GM23248 (cell line): ENCODE measurements at regions of chr22 and their contacts with region 1.

Region 1: GRCh38 chr22:36123673-36124630 is 36.6 kb downstream of the APOL3 start:
- DNase-seq: peak; percentile 99
- H3K4me3 ChIP-seq: peak overlapping the region; percentile 57
- H3K27ac ChIP-seq: peak overlapping the region; percentile 76
- H3K4me1 ChIP-seq: no peaks in the 10 kb centered on the region
- H3K27me3 ChIP-seq: peaks cover 11% of the 10 kb centered on the region

Region 2: DNA sequence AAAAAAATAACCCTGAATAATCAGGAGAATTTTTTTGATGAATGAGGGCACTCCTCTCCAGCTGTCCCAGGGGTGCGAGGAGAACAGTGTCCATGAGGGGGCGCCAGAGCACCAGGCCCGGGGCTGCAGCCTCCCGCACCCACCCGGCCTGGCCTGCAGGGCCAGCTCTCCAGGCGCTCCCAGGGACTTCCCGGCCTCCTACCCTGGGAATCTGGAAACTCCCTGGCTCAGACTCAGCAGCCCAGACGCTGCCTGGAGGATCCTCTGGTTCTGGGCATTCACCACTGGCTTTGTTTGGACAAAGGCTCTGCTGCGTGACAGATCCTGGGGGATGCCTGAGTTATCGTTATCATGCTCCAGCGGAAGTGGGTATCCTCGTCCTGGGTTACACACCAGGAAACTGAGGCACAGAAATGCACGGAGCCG is 693.0 kb before region 1 on chr22:
- in situ Hi-C with region 1: loop called (anchors 25 kb)
- DNase-seq: peak; percentile 96
- H3K4me3 ChIP-seq: no peak overlapping the region
- H3K27ac ChIP-seq: peak overlapping the region; percentile 41; the same call in 1 of the 2 replicates
- H3K4me1 ChIP-seq: peaks cover 21% of the 10 kb centered on the region
- H3K27me3 ChIP-seq: no peaks in the 10 kb centered on the region

Region 3: DNA sequence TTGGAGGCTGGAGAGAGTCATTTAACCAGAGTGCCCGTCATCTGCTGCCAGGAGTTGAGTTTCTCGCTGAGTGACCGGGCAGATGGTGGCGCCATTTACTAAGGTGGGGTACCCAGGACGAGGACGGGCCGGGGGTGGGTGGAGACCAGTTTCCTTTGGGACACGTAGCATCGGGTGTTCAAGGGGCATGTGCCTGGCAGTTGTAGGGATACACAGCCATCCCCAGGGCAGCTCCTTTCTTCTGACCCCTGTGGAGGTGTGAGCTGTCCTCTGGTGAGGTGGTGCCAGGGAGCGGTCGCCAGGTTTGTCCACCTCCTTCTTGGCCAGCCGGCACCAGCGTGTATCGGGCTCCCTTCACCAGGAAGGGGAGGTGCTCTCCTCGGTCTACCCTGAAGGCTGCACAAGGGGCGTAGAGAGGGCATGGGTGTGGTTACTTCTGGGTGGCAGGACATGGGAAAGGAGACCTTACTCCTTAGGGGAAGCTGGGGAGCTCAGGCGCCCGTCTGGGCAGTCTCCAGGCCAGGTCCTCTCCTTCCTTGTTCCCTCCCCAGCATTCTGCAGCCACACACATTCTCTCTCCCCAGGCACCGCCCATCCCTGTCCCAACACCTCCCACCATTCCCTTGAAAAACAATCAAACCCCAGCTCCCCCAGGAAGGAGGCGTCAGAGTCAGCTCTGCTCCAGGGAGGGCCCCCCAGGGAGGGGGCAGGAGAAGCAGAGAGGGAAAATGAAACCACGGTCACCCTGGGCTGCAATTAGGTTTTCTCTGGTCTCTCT is 496.5 kb before region 1 on chr22:
- in situ Hi-C with region 1: loop called (anchors 10 kb)
- DNase-seq: peak; percentile 89
- H3K4me3 ChIP-seq: peak overlapping the region; percentile 75
- H3K27ac ChIP-seq: peak overlapping the region; percentile 98
- H3K4me1 ChIP-seq: peaks cover 23% of the 10 kb centered on the region
- H3K27me3 ChIP-seq: no peaks in the 10 kb centered on the region

Region 4: GRCh38 chr22:35930933-35931332 is 193.0 kb before region 1 on chr22:
- in situ Hi-C with region 1: loop called (anchors 5 kb)
- DNase-seq: peak; percentile 78
- H3K4me3 ChIP-seq: no peak overlapping the region
- H3K27ac ChIP-seq: no peak overlapping the region
- H3K4me1 ChIP-seq: peaks cover 7% of the 10 kb centered on the region; the same call in 1 of the 2 replicates
- H3K27me3 ChIP-seq: no peaks in the 10 kb centered on the region

Region 5: DNA sequence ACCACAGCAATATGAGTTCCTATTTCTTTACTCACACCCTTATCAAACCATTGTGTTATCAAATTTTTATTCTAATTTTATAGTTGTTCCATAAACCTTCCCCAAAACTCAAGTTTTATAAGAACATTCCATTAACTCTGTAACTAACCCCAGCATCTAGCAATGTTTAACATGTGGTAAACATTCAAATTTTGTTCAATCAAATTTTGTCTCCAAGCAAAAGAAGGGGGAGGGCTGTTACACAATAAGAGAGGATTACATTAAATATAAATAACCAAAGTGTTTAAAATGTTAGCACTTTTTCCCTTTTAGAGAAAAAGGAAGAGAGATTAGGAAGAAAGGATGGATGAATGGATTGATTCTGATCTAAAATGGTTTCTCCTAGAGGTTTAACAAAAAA is 115.8 kb before region 1 on chr22:
- in situ Hi-C with region 1: no loop called
- DNase-seq: no peak
- H3K4me3 ChIP-seq: no peak overlapping the region
- H3K27ac ChIP-seq: peak overlapping the region; percentile 65
- H3K4me1 ChIP-seq: peaks cover 43% of the 10 kb centered on the region
- H3K27me3 ChIP-seq: no peaks in the 10 kb centered on the region

Region 6: DNA sequence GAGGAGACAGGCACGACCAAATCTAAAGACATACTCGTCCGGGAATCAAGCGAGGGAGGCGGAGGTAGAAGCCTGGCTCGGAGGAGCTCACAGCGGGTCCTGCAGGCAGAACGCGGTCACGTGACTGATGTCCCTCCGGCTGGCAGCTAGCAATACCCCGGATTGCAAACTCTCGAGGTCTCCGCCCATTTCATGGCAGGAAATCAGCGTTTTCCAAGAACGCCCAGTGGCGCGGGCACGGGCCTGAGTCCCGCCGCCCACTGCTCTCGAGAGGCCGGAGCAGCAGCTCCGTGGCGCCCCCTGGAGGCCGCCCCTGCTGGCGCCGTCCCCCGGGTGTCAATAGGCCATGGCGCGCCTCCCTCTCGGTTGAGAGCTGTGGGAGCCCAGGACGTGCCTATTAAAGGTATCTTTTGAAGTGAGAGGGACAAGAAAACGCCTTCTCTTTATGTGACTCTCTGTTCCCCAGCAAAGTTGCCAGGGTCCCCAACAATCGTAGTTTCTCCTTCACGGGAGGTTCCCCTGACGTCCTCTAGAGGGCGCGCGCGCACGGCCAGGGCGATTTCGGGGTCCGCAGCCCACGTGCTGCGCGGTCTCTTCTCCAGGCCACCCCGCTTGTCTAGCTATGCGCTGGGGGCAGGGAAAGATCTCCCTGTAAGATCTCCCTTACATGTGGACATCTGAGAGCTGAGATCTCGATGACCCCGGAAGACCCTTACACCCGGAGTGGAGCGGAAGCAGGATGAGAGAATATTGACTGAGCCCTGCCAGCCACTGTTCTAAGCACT is 58.0 kb before region 1 on chr22:
- in situ Hi-C with region 1: no loop called
- DNase-seq: peak; percentile 99
- H3K4me3 ChIP-seq: peak overlapping the region; percentile 85
- H3K27ac ChIP-seq: peak overlapping the region; percentile 88
- H3K4me1 ChIP-seq: 0 out of 2 replicates have a peak, but pooled peaks cover 7% of the 10 kb centered on the region
- H3K27me3 ChIP-seq: no peaks in the 10 kb centered on the region